A673 (cell line): ENCODE measurements at regions of chr6 and their contacts with region 1.

Region 1: DNA sequence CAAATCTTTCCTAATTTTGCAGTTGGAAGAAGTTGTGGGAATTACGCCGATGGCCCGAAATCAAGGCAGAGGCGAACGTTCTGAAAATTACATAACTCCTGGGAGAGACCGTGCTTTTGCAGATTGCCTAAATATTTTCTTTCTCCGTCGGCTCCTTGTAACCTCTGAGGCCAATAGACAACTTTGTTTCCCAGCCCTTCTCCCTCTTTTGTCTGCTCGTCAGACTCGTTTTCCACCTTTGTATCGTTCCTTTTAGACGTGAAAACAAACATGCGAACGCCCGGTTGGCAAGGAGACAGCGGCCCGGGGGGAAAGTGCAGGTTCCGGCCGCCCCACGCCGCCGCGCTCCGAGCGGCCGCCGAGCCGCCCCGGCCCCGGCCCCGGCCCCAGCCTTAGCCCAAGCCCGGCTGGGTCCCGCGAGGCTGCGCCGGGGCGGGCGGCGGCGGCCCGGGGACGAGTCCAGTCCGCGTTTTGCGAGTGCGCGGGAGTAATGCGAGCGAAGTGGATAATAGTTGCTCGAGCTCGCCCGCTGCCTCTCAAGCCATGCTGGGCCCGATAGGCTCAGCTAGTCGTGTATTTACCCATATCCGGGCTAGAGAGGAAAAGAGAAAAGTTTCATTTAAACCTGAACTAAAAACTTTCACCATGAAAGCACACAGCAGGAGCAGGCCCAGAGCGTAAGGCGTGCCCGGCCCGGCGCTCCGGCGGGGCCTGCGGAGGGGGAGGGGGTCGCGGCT is at the start of gene ARID1B:
- DNase-seq: peak; percentile 88
- H3K4me3 ChIP-seq: peak within 1 kb of the TSS; percentile 73
- H3K27ac ChIP-seq: peak within 1 kb of the TSS; percentile 96
- H3K4me1 ChIP-seq: peaks cover 43% of the 10 kb centered on the region
- H3K27me3 ChIP-seq: no peaks in the 10 kb centered on the region
- CTCF ChIP-seq: no peak
- total RNA-seq, gene ARID1B: 78.5 and 86.3 TPM in 2 replicates

Region 2: GRCh38 chr6:156564127-156564806 is 212.7 kb before region 1 on chr6:
- CTCF ChIA-PET with region 1: no interaction called
- POLR2A ChIA-PET with region 1: no interaction called
- intact Hi-C with region 1: loop called (anchors 10 kb)
- DNase-seq: peak; percentile 70
- H3K4me3 ChIP-seq: no peak overlapping the region
- H3K27ac ChIP-seq: no peak overlapping the region
- H3K4me1 ChIP-seq: no peaks in the 10 kb centered on the region
- H3K27me3 ChIP-seq: no peaks in the 10 kb centered on the region
- CTCF ChIP-seq: peak; percentile 99

Region 3: GRCh38 chr6:156645097-156645496 is 131.9 kb before region 1 on chr6:
- CTCF ChIA-PET with region 1: no interaction called
- POLR2A ChIA-PET with region 1: no interaction called
- intact Hi-C with region 1: no loop called
- DNase-seq: no peak
- H3K4me3 ChIP-seq: no peak overlapping the region
- H3K27ac ChIP-seq: no peak overlapping the region
- H3K4me1 ChIP-seq: no peaks in the 10 kb centered on the region
- H3K27me3 ChIP-seq: no peaks in the 10 kb centered on the region
- CTCF ChIP-seq: no peak

Region 4: DNA sequence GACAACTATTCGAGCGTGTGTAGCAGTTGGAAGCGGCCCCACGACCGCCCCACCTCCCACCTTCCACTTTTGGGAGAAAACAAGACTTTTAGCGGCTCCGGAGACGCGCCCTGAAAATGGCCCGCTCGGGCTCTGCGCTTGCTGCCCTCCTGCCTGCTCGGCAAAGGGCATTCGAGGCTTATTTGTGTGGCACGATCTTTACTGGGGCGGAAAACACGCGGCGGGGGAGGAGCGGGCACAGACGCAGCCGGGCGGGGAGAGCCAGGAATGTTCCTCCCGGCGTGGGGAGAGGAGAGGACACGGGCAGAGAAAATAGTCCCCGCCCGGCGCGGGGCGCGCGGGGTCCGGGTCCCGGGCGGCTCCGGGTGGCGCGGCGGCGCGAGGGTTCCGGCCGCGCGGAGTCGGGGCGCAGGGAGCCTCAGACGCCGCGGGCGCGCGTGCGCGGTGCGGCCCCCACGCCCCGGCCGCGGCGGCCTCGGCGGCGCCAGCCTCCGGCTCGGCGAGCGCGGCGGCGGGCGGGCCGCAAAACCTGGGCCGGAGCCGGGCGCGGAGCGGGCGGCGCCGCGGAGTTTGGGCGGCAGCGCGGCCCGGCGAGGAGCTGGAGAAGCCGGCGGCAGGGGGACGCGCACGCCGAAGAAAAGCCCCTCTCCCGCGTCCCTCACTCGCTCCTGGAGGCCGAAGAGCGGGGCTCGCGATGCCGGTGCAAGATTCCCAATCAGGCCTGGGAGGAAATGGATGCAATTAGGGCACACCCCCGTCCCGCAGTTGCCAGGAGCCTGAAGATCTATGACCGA is 89.8 kb before region 1 on chr6:
- CTCF ChIA-PET with region 1: no interaction called
- POLR2A ChIA-PET with region 1: no interaction called
- intact Hi-C with region 1: loop called (anchors 1 kb)
- DNase-seq: peak; percentile 91
- H3K4me3 ChIP-seq: peak overlapping the region; percentile 64
- H3K27ac ChIP-seq: peak overlapping the region; percentile 96
- H3K4me1 ChIP-seq: peaks cover 5% of the 10 kb centered on the region
- H3K27me3 ChIP-seq: no peaks in the 10 kb centered on the region
- CTCF ChIP-seq: no peak

Region 5: DNA sequence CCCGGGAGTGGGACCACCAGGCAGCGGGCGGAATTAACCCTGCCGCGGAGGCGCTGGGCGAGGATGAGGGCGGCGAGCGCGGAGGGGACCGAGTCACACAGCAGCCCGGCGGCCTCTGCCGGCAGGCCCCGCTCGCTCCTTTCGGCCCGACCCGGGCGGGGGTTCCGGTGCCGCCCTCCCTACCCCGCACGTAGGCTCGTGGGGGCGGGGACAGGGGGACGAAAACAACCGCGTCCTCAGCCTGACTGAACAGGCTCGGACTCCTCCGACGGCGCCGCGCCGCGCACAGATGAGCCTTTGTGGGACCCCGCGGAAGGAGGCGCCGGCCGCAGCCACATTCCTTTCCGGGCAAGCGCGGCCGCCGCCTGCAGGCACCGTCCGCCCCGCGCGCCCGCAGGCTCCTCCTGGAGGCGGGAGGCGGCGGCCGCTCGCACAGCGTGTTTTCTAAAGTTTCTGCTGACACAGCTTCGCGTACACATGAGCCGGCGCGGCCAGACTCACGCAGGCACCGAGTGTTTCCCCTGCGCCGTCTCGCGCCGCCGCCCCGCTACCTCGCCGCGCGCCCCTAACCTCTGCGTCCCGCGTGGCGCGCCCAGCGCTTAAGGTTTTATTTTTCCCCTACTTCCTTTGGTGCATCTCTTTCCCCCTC is 244.5 kb after region 1 on chr6:
- CTCF ChIA-PET with region 1: no interaction called
- POLR2A ChIA-PET with region 1: no interaction called
- intact Hi-C with region 1: loop called (anchors 2 kb)
- DNase-seq: peak; percentile 95
- H3K4me3 ChIP-seq: peak overlapping the region; percentile 84
- H3K27ac ChIP-seq: peak overlapping the region; percentile 97
- H3K4me1 ChIP-seq: peaks cover 28% of the 10 kb centered on the region
- H3K27me3 ChIP-seq: no peaks in the 10 kb centered on the region
- CTCF ChIP-seq: peak; percentile 32

Region 6: DNA sequence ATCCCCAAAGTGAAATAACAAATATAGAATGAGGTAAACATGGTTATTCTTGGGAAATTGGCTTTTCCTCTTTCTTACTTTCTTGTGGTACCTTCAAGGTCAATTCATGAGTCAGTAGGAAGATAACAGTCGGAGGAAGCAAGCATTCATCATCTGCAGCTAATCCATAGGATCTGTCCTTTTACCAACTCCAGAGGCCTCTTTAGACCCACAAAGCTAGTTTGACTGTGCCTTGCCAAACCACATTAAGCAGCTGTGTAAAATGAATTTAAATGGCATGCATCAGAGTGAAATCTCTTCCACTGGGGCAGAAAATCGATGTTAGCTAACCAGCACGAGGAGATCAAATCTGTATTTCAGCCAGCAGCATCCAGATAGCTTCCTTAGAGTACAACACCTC is 375.0 kb after region 1 on chr6:
- CTCF ChIA-PET with region 1: no interaction called
- POLR2A ChIA-PET with region 1: no interaction called
- intact Hi-C with region 1: loop called (anchors 10 kb)
- DNase-seq: peak; percentile 28
- H3K4me3 ChIP-seq: no peak overlapping the region
- H3K27ac ChIP-seq: peak overlapping the region; percentile 0
- H3K4me1 ChIP-seq: peaks cover 34% of the 10 kb centered on the region
- H3K27me3 ChIP-seq: no peaks in the 10 kb centered on the region
- CTCF ChIP-seq: no peak

Region 7: DNA sequence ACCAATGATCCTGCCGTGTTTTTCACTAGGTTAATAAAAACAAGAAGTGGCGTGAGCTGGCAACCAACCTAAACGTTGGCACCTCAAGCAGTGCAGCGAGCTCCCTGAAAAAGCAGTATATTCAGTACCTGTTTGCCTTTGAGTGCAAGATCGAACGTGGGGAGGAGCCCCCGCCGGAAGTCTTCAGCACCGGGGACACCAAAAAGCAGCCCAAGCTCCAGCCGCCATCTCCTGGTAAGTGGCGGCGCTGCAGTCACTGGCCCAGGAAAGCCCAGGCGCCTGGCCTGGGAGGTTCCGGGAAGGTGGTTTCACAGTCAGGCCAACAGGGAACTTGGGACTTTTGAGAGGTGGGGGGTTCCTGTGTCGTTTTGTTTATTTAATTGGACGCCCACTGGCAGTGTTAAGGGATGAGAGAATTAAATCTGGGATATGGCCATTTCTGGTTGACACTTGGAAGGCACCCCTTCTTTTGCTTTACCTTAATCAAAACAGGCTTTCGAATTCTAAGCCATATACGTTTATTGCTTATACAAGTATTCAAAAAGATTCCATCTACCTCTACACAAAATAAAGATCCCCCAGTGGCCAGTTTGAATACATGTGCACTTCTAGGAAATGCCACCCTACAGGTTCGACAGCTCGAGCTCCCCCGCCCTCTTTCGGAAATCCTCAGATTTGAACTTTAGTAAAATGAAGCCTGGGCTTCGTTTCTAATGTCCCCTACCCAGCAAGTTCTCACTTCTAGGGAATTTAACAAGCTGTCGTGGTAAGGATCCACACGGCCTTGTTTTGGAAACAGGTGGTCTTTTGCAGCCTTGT is 407.4 kb after region 1 on chr6:
- CTCF ChIA-PET with region 1: no interaction called
- POLR2A ChIA-PET with region 1: no interaction called
- intact Hi-C with region 1: loop called (anchors 10 kb)
- DNase-seq: peak; percentile 73
- H3K4me3 ChIP-seq: no peak overlapping the region
- H3K27ac ChIP-seq: no peak overlapping the region
- H3K4me1 ChIP-seq: no peaks in the 10 kb centered on the region
- H3K27me3 ChIP-seq: no peaks in the 10 kb centered on the region
- CTCF ChIP-seq: peak; percentile 96